Naive thymus-derived CD8-positive, alpha-beta T cell (primary cell): ENCODE measurements at regions of chr14 and their contacts with region 1.

Region 1: GRCh38 chr14:91350813-91351511 is 66.7 kb downstream of the CCDC88C start:
- DNase-seq: peak in 8 of 10 donors; percentile 58 to 83 (median 72)
- ATAC-seq: peak; percentile 67 to 72
- H3K4me3 Mint-ChIP-seq: peak overlapping the region; percentile 74 to 93 (median 88)
- H3K27ac Mint-ChIP-seq: peak overlapping the region; percentile 94 to 99 (median 96)
- H3K4me1 Mint-ChIP-seq: peaks cover 64 to 97% (median 93%) of the 10 kb centered on the region in 4 donors
- H3K27me3 Mint-ChIP-seq: no peaks in the 10 kb centered on the region

Region 2: DNA sequence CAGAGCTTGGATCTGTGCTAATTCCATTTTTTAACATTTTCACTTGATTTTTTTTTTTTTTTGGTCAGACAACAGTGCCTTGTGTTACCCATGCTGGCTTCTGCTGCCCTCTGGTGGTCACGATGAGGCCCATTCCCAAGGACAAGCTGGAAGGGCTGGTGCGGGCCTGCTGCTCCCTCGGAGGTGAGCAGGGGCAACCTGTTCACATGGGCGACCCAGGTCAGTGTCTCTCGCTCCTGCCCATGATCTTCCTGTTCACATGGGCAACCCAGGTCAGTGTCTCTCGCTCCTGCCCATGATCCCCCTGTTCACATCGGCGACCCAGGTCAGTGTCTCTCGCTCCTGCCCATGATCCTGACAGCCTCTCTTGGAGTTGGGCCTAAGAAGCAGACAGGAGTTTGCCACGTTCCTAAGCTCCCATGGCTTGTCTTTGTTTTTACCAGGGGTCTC is 177.7 kb before region 1 on chr14:
- POLR2A ChIA-PET with region 1: no interaction called
- DNase-seq: peak; percentile 63 to 90 (median 72)
- ATAC-seq: peak; percentile 78
- H3K4me3 Mint-ChIP-seq: no peak overlapping the region
- H3K27ac Mint-ChIP-seq: peak overlapping the region in 3 of 10 donors; percentile 0 to 30 (median 9)
- H3K4me1 Mint-ChIP-seq: peaks cover 7 to 14% (median 11%) of the 10 kb centered on the region in 4 donors
- H3K27me3 Mint-ChIP-seq: no peaks in the 10 kb centered on the region

Region 3: GRCh38 chr14:91286530-91286937 is 64.4 kb before region 1 on chr14:
- POLR2A ChIA-PET with region 1: no interaction called
- DNase-seq: peak; percentile 54 to 86 (median 73)
- ATAC-seq: peak; percentile 77 to 78
- H3K4me3 Mint-ChIP-seq: peak overlapping the region in 1 of 10 donors; percentile 5
- H3K27ac Mint-ChIP-seq: peak overlapping the region in 9 of 10 donors; percentile 28 to 85 (median 71)
- H3K4me1 Mint-ChIP-seq: peaks cover 14 to 28% (median 23%) of the 10 kb centered on the region in 4 donors
- H3K27me3 Mint-ChIP-seq: no peaks in the 10 kb centered on the region

Region 4: GRCh38 chr14:91323671-91324605 is 27.0 kb before region 1 on chr14:
- POLR2A ChIA-PET with region 1: interaction called, 41 read pairs
- DNase-seq: peak; percentile 88 to 96 (median 93)
- ATAC-seq: peak; percentile 77 to 85
- H3K4me3 Mint-ChIP-seq: peak overlapping the region; percentile 72 to 96 (median 83)
- H3K27ac Mint-ChIP-seq: peak overlapping the region; percentile 95 to 99 (median 98)
- H3K4me1 Mint-ChIP-seq: peaks cover 50 to 89% (median 86%) of the 10 kb centered on the region in 4 donors
- H3K27me3 Mint-ChIP-seq: no peaks in the 10 kb centered on the region

Region 5: GRCh38 chr14:91367173-91368171 is 16.5 kb after region 1 on chr14:
- POLR2A ChIA-PET with region 1: interaction called, 200 read pairs
- DNase-seq: peak; percentile 51 to 85 (median 74)
- ATAC-seq: peak; percentile 74 to 85
- H3K4me3 Mint-ChIP-seq: peak overlapping the region; percentile 69 to 88 (median 81)
- H3K27ac Mint-ChIP-seq: peak overlapping the region; percentile 89 to 99 (median 94)
- H3K4me1 Mint-ChIP-seq: peaks cover 45 to 97% (median 91%) of the 10 kb centered on the region in 4 donors
- H3K27me3 Mint-ChIP-seq: no peaks in the 10 kb centered on the region

Region 6: GRCh38 chr14:91390165-91390778 is 39.3 kb after region 1 on chr14:
- POLR2A ChIA-PET with region 1: interaction called, 16 read pairs
- DNase-seq: peak in 5 of 10 donors; percentile 43 to 59 (median 50)
- ATAC-seq: peak; percentile 46 to 73
- H3K4me3 Mint-ChIP-seq: peak overlapping the region; percentile 19 to 99 (median 80)
- H3K27ac Mint-ChIP-seq: peak overlapping the region; percentile 79 to 99 (median 94)
- H3K4me1 Mint-ChIP-seq: peaks cover 45 to 95% (median 90%) of the 10 kb centered on the region in 4 donors
- H3K27me3 Mint-ChIP-seq: no peaks in the 10 kb centered on the region

Region 7: DNA sequence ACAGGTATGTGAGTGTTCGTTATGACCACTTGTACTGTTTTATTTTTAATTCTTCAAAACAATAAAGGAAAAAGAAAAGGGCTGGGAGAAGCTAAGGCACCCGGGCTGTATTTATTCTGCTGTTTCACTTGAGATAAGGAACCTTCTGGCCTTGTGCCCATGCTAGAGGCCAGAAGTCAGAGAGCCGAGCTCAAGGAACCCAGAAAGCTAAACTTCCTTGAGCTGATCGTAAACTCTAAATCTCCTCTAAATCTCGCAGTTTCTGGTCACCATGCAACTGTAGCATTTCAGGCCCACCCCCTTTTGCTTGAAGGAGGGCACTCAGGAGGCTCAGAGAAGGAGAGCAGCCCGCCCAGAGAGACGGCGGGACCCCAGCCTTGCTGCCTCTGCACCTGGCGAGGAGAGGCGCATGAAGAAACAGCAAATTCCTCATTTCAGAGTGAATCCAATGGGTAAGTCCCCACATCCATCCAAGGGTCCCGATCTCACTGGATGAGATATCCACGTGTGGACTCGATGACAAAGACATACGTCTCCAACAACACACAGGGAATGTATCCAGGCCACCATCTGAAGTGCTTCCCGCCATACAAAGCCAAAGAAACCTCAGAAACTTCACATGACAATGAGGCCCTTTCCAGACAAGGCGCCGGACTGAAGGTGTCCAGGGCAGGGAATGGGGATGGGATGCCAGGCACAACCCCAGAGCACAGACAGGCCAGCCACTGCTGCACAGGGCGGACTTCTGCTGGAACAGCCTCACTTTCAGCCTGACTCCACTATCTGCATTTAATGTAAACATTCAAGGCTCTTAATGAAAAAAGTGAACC is 52.0 kb after region 1 on chr14:
- POLR2A ChIA-PET with region 1: interaction called, 80 read pairs
- DNase-seq: peak in 5 of 10 donors; percentile 32 to 59 (median 52)
- ATAC-seq: peak; percentile 7 to 32
- H3K4me3 Mint-ChIP-seq: peak overlapping the region; percentile 75 to 88 (median 84)
- H3K27ac Mint-ChIP-seq: peak overlapping the region; percentile 91 to 99 (median 98)
- H3K4me1 Mint-ChIP-seq: peaks cover 49 to 99% (median 95%) of the 10 kb centered on the region in 4 donors
- H3K27me3 Mint-ChIP-seq: no peaks in the 10 kb centered on the region

Region 8: GRCh38 chr14:91444335-91445020 is 93.5 kb after region 1 on chr14:
- POLR2A ChIA-PET with region 1: no interaction called
- DNase-seq: no peak
- ATAC-seq: no peak
- H3K4me3 Mint-ChIP-seq: no peak overlapping the region
- H3K27ac Mint-ChIP-seq: no peak overlapping the region
- H3K4me1 Mint-ChIP-seq: peaks cover 0 to 2% (median 0%) of the 10 kb centered on the region in 4 donors
- H3K27me3 Mint-ChIP-seq: peaks cover 0 to 4% (median 0%) of the 10 kb centered on the region in 5 donors